AG04450 (cell line): ENCODE measurements at regions of chr14 and their contacts with region 1.

Region 1: DNA sequence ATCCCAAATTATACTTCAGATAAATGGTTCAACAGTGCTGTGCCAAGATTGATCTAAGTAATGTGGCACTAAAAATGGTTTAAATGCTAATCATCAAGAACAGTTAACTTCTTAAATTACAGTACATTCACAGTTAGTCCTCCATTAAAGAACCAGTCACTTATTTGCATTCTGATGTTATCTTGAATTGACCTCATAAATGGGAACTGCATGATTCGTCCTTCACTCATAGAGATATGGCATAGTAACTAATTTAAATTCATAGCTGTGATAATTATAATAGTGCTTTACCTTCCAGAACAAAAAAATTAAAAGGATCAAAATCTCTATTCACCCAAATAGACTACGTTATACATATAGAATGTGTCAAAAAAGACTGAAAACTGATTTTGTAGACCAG is 61.1 kb downstream of the COCH start:
- DNase-seq: no peak
- H3K4me3 ChIP-seq: no peak overlapping the region
- H3K27ac ChIP-seq: no peak overlapping the region
- H3K27me3 ChIP-seq: no peaks in the 10 kb centered on the region
- CTCF ChIP-seq: no peak

Region 2: GRCh38 chr14:31038521-31039166 is 103.2 kb after region 1 on chr14:
- CTCF ChIA-PET with region 1: no interaction called
- POLR2A ChIA-PET with region 1: no interaction called
- DNase-seq: no peak
- H3K4me3 ChIP-seq: no peak overlapping the region
- H3K27ac ChIP-seq: no peak overlapping the region
- H3K27me3 ChIP-seq: no peaks in the 10 kb centered on the region
- CTCF ChIP-seq: no peak

Region 3: DNA sequence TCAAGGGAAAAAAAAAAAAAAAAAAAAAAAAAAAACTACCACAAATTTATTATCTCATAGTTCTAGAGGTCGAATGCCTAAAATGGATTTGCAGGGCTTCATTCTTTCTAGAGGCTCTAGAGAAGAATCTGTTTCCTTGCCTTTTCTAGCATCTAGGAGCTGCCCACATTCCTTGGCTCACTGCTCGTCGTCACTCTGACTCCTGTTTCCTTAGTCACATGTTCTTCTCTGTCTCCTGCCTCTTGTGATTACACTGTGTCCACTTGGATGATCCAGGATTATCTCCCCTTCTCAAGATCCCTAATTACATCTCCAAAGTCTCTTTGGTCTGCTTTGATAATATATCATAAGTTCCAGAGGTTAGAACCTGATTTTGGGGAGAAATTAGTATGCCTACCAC is 183.4 kb after region 1 on chr14:
- CTCF ChIA-PET with region 1: no interaction called
- POLR2A ChIA-PET with region 1: interaction called, 13 read pairs
- DNase-seq: no peak
- H3K4me3 ChIP-seq: no peak overlapping the region
- H3K27ac ChIP-seq: no peak overlapping the region
- H3K27me3 ChIP-seq: no peaks in the 10 kb centered on the region
- CTCF ChIP-seq: no peak